OCI-LY7 (cell line): ENCODE measurements at regions of chr2 and their contacts with region 1.

Region 1: DNA sequence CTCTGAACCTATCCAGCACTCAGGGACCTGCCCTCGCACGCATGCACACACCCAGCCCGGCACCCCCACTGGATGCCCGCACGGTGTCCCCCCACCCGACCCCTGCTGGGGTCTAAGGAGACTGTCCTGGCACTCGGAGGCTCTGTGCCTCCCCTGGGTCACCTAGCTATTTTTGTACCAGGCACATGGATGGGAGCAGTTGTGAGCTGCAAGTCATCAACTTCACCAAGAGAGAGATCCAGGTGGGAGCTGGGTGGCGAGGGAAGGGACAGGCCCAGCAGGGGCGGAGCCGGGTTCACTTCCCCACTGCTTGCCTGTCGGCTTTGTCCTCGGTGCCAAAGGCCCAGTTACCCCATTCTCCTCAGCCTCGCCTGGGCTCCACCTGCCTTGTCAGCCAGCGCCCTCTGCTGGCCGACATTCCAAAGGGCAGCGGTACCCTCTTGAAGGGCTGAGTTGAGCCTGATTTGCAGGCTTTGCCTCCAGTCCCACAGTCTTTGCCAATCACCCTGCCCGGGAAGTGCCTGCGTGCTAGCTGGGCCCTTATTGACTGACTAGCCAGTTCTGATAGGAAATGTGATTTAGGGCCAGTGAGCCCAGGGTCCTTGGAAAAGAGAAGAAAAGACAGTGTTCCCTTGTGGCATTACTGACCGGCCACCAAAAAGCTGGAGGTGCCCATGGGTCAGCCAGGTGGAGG is 5.8 kb downstream of the NT5DC4 start:
- DNase-seq: peak; percentile 87
- H3K4me3 ChIP-seq: no peak overlapping the region
- H3K27ac ChIP-seq: no peak overlapping the region
- H3K4me1 ChIP-seq: peaks cover 5% of the 10 kb centered on the region
- CTCF ChIP-seq: peak; percentile 94

Region 2: DNA sequence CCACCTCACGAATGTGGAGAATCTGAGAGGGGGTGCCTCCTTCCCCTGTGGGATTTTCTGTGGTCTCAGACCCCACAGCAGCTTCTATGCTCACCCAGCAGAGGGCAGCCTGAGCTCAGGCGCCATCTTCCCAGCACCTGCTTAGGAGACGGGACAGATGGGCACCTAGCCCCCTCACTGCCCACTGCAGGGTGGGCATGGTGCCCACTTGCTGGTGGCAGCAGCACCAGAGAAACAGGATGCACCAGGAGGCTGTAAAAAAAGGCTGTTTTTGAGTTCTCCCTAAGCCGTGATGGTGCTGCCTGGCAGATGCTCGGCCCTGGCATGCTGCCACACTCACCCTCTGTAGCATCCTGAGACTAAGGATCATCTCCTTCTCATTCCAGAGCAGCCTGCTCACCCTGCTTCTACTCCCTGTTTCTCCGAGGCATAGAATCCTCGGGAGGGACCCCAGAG is 100.0 kb before region 1 on chr2:
- CTCF ChIA-PET with region 1: interaction called, 5 read pairs
- POLR2A ChIA-PET with region 1: interaction called, 4 read pairs
- intact Hi-C with region 1: loop called (anchors 1 kb)
- DNase-seq: peak; percentile 72
- H3K4me3 ChIP-seq: peak overlapping the region; percentile 23
- H3K27ac ChIP-seq: no peak overlapping the region
- H3K4me1 ChIP-seq: peaks cover 15% of the 10 kb centered on the region
- CTCF ChIP-seq: peak; percentile 94